Common myeloid progenitor, CD34-positive (primary cell): ENCODE measurements at regions of chr1 and their contacts with region 1.

Region 1: DNA sequence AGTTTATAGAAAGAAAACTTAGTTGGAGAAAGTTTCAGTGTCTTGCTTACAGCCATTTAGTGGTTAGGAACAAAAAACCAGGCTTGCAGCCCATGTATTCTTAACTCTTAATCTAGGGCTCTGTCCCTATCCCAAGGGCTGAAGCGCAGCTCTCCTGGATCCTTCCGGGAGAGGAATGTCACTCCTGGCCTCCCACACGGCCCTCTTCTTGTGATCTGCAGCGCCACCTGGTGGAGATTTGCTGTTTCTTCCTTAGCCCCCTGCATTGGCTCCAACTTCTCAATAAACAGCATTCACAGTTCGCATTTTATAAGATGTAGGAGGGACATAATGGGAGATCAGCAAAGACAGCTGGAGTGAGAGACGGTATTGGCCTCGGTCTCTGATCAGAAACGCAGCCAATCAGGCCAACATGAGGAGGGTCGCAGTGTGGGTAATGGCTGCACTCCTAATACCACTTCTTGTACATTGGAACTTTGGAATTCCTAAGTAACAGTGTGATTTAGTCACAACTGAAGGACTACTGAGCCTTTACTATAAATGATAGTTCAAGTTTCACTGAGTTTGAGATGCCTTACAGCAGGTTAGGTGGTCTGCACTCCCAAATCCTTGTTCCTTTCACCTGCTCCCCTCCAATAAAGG is 283.4 kb downstream of the ASTN1 start:
- DNase-seq: peak; percentile 36 to 61 (median 44)
- H3K4me3 ChIP-seq: no peak overlapping the region
- H3K27ac ChIP-seq: no peak overlapping the region
- H3K4me1 ChIP-seq: no peaks in the 10 kb centered on the region
- H3K27me3 ChIP-seq: no peaks in the 10 kb centered on the region

Region 2: GRCh38 chr1:176843352-176844297 is 37.5 kb before region 1 on chr1:
- CTCF ChIA-PET with region 1: no interaction called
- POLR2A ChIA-PET with region 1: no interaction called
- DNase-seq: peak; percentile 3 to 38 (median 17)
- H3K4me3 ChIP-seq: no peak overlapping the region
- H3K27ac ChIP-seq: no peak overlapping the region
- H3K4me1 ChIP-seq: no peaks in the 10 kb centered on the region
- H3K27me3 ChIP-seq: no peaks in the 10 kb centered on the region

Region 3: GRCh38 chr1:176897350-176898236 is 16.5 kb after region 1 on chr1:
- CTCF ChIA-PET with region 1: interaction called, 10 read pairs
- POLR2A ChIA-PET with region 1: no interaction called
- DNase-seq: peak; percentile 42 to 71 (median 65)
- H3K4me3 ChIP-seq: no peak overlapping the region
- H3K27ac ChIP-seq: no peak overlapping the region
- H3K4me1 ChIP-seq: peaks cover 0 to 5% (median 0%) of the 10 kb centered on the region in 4 experiments
- H3K27me3 ChIP-seq: peaks cover 0 to 23% (median 4%) of the 10 kb centered on the region in 5 experiments

Region 4: DNA sequence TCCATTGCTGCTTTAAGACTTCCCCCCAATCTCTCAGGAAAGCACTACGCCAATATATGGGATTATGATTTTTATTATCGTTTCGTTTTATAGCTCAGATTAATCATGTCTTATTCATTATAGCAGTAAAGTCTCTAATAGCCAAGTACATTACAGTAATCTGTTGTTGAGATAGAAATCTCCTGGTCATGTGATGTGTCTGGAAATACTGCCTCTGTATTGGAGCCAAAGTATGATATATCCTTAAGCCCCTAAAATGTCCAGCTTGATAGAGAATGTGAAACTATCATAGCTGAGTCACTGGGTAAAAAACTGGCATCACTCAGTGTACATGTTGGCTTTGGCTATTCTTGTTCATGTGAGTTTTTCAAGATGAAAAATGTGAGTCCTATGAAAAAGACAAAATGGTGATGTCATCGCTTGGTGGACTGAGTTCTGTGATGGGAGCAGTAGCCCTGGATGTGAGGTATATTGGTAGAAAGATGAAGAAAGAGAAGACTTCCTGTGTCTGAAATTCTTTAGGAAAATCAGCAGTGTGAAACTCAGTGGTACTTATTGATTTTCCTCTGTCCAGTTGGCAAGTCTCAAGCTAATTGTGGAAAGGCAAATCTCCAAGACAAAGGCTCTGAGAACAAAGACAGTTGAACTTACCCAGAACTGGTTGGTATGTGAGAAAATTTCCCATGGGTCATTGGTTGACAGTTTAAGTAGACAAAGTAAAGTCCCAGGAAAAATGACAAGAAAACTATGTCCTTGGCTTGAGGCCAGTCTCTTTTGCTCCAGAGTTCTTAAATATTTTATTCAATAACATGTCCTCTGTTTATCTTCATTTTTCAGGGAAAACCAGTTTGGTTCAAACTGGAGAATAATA is 365.9 kb after region 1 on chr1:
- CTCF ChIA-PET with region 1: no interaction called
- POLR2A ChIA-PET with region 1: no interaction called
- DNase-seq: no peak
- H3K4me3 ChIP-seq: no peak overlapping the region
- H3K27ac ChIP-seq: no peak overlapping the region
- H3K4me1 ChIP-seq: no peaks in the 10 kb centered on the region
- H3K27me3 ChIP-seq: no peaks in the 10 kb centered on the region